Prostate gland (tissue), 2 donors: ENCODE measurements at regions of chr14 and their contacts with region 1.

Region 1: GRCh38 chr14:34098045-34098984 is 147.4 kb upstream of the EGLN3 start:
- DNase-seq: peak; percentile 54
- H3K4me3 ChIP-seq: no peak overlapping the region
- H3K27ac ChIP-seq: peak overlapping the region in 1 of 2 donors; percentile 7
- H3K4me1 ChIP-seq: no peaks in the 10 kb centered on the region
- H3K27me3 ChIP-seq: no peaks in the 10 kb centered on the region
- CTCF ChIP-seq: peak in 3 of 4 experiments; percentile 33 to 73 (median 54)
- POLR2A ChIP-seq: peak; percentile 2

Region 2: DNA sequence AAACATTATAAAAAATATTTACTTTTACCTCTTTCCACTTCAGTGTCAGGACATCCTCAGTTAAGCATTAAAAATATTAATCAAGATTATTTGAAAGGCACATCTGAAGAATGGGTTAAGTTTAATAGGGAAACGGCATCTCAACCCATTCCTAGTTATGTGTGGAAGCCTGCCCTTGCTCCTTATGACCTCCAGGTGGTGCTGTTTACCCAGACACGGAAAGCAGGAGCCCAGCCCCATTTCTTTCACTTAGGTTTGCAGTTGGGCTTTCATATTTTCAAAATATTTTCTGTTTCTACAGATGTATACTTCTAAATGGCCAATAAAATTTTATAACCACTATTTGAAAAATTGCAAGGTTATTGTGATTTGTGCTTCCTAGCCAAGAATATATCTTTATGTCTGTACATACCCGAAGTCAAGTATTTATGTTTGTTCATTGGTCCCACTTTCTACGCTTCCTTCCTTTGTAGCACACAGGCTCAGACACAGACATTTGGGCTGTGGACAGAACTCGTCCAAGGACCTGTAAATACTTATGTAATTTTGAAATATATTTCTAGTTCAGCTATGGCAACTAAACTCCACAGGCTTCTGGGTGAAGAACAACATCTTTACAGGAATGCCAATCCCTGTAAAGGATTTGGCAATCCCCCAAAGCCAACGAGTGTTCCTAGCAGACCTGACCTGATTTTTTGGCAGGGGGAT is 1522.1 kb before region 1 on chr14:
- intact Hi-C with region 1: loop called (anchors 10 kb)
- DNase-seq: peak; percentile 43
- H3K4me3 ChIP-seq: no peak overlapping the region
- H3K27ac ChIP-seq: no peak overlapping the region
- H3K4me1 ChIP-seq: no peaks in the 10 kb centered on the region
- H3K27me3 ChIP-seq: no peaks in the 10 kb centered on the region
- CTCF ChIP-seq: peak; percentile 72 to 89 (median 86)
- POLR2A ChIP-seq: no peak

Region 3: GRCh38 chr14:33839193-33840076 is 258.9 kb before region 1 on chr14:
- intact Hi-C with region 1: loop called (anchors 2 kb)
- DNase-seq: peak; percentile 19
- H3K4me3 ChIP-seq: no peak overlapping the region
- H3K27ac ChIP-seq: no peak overlapping the region
- H3K4me1 ChIP-seq: no peaks in the 10 kb centered on the region
- H3K27me3 ChIP-seq: no peaks in the 10 kb centered on the region
- CTCF ChIP-seq: peak; percentile 51 to 77 (median 72)
- POLR2A ChIP-seq: no peak

Region 4: DNA sequence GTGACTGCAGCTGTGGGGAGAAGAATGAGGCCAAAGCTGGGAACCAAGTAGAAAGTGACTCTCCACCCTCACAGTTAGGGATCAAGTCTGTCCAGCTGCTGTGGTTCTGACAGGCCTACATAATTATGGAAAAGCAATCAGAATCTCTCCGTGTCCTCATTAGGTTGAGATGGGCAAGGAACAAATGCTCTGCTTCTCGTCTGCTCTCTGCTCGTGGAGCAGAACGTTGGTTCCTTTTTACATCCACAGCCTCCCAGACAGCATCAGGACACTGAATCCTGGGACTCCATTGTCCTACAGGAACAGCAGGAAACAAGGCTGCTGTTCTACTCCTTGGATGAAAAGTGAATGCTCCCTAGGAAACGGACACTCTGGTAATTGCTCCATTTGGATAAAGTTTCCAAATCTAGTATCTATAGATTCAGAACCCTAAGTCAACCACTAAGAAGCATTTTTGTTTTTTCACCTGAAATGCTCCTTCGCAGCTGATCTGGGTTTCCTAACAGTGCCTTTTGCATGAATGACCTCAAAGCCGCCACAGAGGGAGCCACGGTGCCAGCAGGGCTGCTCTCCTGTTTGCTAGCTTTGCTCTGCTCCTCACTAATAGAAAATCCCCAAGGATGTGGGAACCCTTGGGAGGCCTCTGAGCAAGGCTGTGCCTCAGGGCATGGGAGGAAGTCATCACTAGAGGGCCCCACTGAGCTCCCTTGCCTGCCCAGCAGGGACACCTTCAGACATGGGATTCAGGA is 249.4 kb before region 1 on chr14:
- intact Hi-C with region 1: loop called (anchors 2 kb)
- DNase-seq: peak; percentile 21
- H3K4me3 ChIP-seq: no peak overlapping the region
- H3K27ac ChIP-seq: no peak overlapping the region
- H3K4me1 ChIP-seq: no peaks in the 10 kb centered on the region
- H3K27me3 ChIP-seq: no peaks in the 10 kb centered on the region
- CTCF ChIP-seq: peak in 3 of 4 experiments; percentile 36 to 45 (median 44)
- POLR2A ChIP-seq: no peak

Region 5: GRCh38 chr14:33950320-33951182 is 147.8 kb before region 1 on chr14 and contains the start of gene EGLN3:
- intact Hi-C with region 1: loop called (anchors 10 kb)
- DNase-seq: peak; percentile 90
- H3K4me3 ChIP-seq: peak within 1 kb of the TSS; percentile 33 to 39
- H3K27ac ChIP-seq: peak within 1 kb of the TSS; percentile 15 to 20
- H3K4me1 ChIP-seq: peaks cover 5% of the 10 kb centered on the region
- H3K27me3 ChIP-seq: no peaks in the 10 kb centered on the region
- CTCF ChIP-seq: no peak
- POLR2A ChIP-seq: peak; percentile 99
- total RNA-seq, gene EGLN3: 6.1 to 6.8 TPM